ENCODE measurements at regions of chr16 and their contacts with region 1.

Region 1: DNA sequence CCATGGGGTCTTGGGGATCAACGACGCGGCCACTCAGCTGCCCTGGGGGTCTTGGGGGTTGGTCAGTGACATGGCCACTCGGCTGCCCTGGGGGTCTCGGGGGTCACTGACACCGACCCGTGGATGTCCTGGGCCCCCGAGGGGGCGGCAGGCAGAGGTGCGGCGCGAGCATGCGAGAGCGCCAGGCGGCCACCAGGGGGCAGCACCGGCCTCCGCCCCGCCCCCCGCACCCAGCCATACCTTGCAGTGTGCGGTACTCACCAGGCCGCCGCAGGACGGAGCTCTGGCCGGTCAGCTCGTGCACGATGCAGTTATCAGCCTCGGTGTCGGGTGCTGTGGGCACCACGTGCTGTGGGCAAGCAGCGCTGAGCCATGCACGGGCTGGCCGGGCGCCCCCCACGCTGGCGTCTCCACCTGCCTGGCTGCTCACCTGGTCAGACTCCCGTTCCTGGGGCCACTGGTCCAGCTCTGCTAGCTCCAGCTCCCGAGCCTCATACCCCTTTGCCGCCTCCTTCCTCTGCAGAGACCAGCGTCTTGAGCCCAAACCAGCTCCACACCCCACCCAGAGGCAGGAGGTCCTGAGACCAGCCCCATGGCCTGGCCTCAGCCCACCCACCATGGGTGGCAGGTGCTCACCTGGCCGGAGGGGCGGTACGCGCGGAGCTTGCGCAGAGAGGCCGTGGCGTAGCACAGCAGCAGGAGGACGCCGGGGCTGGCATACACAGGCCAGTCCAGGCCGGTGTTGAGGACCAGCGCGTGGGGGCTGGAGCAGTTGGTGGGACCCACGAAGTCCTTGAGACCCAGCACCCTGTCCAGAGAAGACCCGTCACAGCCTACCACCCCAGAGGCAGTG is 31.2 kb downstream of the CTU2 start:
- DNase-seq: peak; percentile 13
- ATAC-seq: peak; percentile 98
- H3K4me3 ChIP-seq: no peak overlapping the region
- H3K27ac ChIP-seq: no peak overlapping the region
- H3K4me1 ChIP-seq: peaks cover 3% of the 10 kb centered on the region; the same call in 1 of the 2 replicates
- H3K27me3 ChIP-seq: no peaks in the 10 kb centered on the region
- CTCF ChIP-seq: peak; percentile 93 to 96 (median 95)
- EP300 ChIP-seq: no peak
- POLR2A ChIP-seq: no peak; the same call in 1 of the 2 replicates
- RAD21 ChIP-seq: peak; percentile 62; the same call in 1 of the 2 replicates

Region 2: DNA sequence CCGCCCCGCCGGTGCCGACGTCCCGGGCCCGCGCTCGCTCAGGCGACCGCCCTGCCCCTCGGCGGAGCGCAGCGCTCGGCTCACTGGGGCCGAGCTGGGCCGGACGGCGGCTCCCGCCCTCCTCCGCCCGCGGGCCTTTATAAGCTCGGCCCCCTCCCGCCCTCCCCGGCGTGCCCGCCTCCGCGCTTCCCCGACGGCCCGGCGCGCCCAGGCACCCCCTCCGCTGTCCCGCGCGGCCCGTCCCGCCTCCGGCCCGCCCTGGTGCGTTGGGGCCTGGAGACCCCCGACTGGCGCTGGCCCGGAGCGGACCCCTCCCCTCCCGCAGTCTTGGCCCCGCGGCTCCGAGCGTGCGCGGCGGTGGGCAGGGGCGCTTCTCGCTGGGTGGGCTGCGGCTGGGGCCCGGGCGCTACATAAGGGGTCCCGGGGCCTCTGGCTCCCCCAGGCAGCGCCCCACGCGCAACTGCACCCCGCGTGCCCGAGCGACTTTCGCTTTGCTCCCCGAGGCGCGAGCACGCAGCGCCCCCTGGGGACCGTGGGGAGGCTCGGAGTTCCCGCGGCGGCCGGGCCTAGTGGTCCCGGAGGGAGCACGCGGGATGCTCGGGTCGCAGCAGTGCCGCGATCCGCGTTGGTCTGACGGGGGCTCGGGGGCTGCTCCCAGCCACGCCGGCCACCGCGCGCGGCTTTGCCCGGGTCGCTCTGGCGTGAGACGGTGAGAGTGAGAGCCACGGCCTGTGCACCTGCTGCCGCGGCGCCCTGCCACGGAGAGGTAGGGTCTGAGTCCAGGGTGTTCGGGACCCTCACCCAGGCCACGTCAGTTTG is 47.8 kb after region 1 on chr16 and contains the start of gene PIEZO1:
- CTCF ChIA-PET with region 1: interaction called, 51 read pairs
- POLR2A ChIA-PET with region 1: interaction called, 6 read pairs
- RAD21 ChIA-PET with region 1: interaction called, 50 read pairs
- SMC1A ChIA-PET with region 1: interaction called, 10 read pairs
- in situ Hi-C with region 1: no loop called
- intact Hi-C with region 1: loop called (anchors 2 kb)
- DNase-seq: no peak
- ATAC-seq: peak; percentile 40
- H3K4me3 ChIP-seq: peak within 1 kb of the TSS; percentile 80
- H3K27ac ChIP-seq: peak within 1 kb of the TSS; percentile 75
- H3K4me1 ChIP-seq: peaks cover 31% of the 10 kb centered on the region
- H3K27me3 ChIP-seq: no peaks in the 10 kb centered on the region
- CTCF ChIP-seq: peak; percentile 71 to 94 (median 85)
- EP300 ChIP-seq: no peak
- POLR2A ChIP-seq: peak; percentile 92
- RAD21 ChIP-seq: peak; percentile 87
- polyA plus RNA-seq, gene PIEZO1: 1.3 to 7.2 TPM

Region 3: GRCh38 chr16:88811769-88812512 is 74.4 kb after region 1 on chr16 and contains the start of gene APRT:
- CTCF ChIA-PET with region 1: interaction called, 17 read pairs
- POLR2A ChIA-PET with region 1: no interaction called
- RAD21 ChIA-PET with region 1: interaction called, 7 read pairs
- SMC1A ChIA-PET with region 1: interaction called, 5 read pairs
- in situ Hi-C with region 1: no loop called
- intact Hi-C with region 1: no loop called
- DNase-seq: peak; percentile 83
- ATAC-seq: peak; percentile 83
- H3K4me3 ChIP-seq: peak within 1 kb of the TSS; percentile 85
- H3K27ac ChIP-seq: peak within 1 kb of the TSS; percentile 95
- H3K4me1 ChIP-seq: peaks cover 20% of the 10 kb centered on the region
- H3K27me3 ChIP-seq: no peaks in the 10 kb centered on the region
- CTCF ChIP-seq: peak in 2 of 3 experiments; percentile 39 to 56; a peak in 3 of 6 replicates
- EP300 ChIP-seq: no peak
- POLR2A ChIP-seq: peak; percentile 91
- RAD21 ChIP-seq: 0 out of 2 replicates have a peak, but pooled peaks have one; percentile 30
- polyA plus RNA-seq, gene APRT: 30.6 to 100 TPM

Region 4: GRCh38 chr16:89171463-89172170 is 434.1 kb after region 1 on chr16 and contains the start of gene CDH15:
- CTCF ChIA-PET with region 1: interaction called, 11 read pairs
- POLR2A ChIA-PET with region 1: no interaction called
- RAD21 ChIA-PET with region 1: interaction called, 9 read pairs
- SMC1A ChIA-PET with region 1: no interaction called
- in situ Hi-C with region 1: no loop called
- intact Hi-C with region 1: loop called (anchors 1 kb)
- DNase-seq: peak; percentile 80
- ATAC-seq: peak; percentile 88
- H3K4me3 ChIP-seq: no peak within 1 kb of the TSS; the same call in 1 of the 2 replicates
- H3K27ac ChIP-seq: no peak within 1 kb of the TSS
- H3K4me1 ChIP-seq: peaks cover 7% of the 10 kb centered on the region
- H3K27me3 ChIP-seq: peaks cover 0 to 8% of the 10 kb centered on the region in 2 experiments; a peak in 3 of 4 replicates
- CTCF ChIP-seq: no peak
- EP300 ChIP-seq: no peak
- POLR2A ChIP-seq: no peak
- RAD21 ChIP-seq: no peak
- polyA plus RNA-seq, gene CDH15: 0.02 TPM in 1 of 2 experiments, not detected in the other

Measured in GM12878 (cell line).